ENCODE measurements at regions of chr5 and their contacts with region 1.

Region 1: GRCh38 chr5:124902097-124902821 is 155.8 kb upstream of the ZNF608 start:
- DNase-seq: no peak
- H3K4me3 ChIP-seq: no peak overlapping the region
- H3K27ac ChIP-seq: no peak overlapping the region
- H3K4me1 ChIP-seq: peaks cover 3% of the 10 kb centered on the region
- H3K27me3 ChIP-seq: no peaks in the 10 kb centered on the region
- CTCF ChIP-seq: no peak
- POLR2A ChIP-seq: no peak

Region 2: DNA sequence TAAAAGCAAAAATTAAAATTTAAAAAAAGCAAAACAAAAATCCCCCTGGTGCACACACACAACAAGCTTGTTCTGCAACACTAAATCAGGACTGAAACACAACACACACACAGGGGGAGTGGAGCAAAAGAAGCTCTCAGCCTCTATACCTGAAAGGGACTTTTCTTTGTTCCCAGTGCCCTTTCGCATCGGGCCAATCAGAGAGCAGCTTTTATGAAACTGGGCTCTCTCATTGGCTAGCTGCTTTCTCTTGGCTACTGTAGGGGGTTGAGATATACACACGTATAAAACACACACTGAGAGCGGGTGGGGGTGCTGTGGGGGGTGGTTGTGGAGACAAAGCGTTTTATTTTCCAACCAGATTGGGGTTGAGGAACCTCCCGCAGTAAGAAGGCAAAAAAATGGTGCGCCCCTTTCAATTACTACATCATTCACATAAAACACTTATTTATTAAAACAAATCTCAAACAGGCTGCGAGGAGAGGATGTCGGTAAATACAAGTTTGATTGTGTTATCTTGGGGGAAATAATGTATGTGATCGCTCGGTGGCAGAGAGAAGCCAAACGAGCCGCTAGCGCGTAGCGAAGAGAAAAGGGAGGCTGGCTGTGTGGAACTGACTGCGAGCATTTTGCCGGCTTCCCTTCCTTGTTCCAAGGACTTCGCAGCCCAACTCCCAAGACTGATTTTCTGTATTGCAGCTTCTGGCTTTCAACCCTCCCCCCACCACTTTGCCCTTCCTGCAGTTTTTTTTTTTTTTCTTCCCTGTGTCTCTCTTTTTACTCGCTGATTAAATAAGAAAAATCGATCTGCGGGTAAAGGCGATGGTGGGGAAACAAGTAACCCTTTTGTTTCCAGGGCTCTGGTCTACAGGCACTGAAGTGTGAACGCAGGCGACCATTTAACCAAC is 153.3 kb before region 1 on chr5:
- intact Hi-C with region 1: loop called (anchors 5 kb)
- DNase-seq: peak; percentile 93
- H3K4me3 ChIP-seq: peak overlapping the region; percentile 33 to 49
- H3K27ac ChIP-seq: peak overlapping the region; percentile 83 to 87
- H3K4me1 ChIP-seq: peaks cover 3% of the 10 kb centered on the region
- H3K27me3 ChIP-seq: no peaks in the 10 kb centered on the region
- CTCF ChIP-seq: no peak
- POLR2A ChIP-seq: peak; percentile 51

Region 3: GRCh38 chr5:124824637-124825158 is 77.6 kb before region 1 on chr5:
- intact Hi-C with region 1: loop called (anchors 10 kb)
- DNase-seq: no peak
- H3K4me3 ChIP-seq: no peak overlapping the region
- H3K27ac ChIP-seq: no peak overlapping the region
- H3K4me1 ChIP-seq: no peaks in the 10 kb centered on the region
- H3K27me3 ChIP-seq: no peaks in the 10 kb centered on the region
- CTCF ChIP-seq: no peak
- POLR2A ChIP-seq: no peak

Region 4: DNA sequence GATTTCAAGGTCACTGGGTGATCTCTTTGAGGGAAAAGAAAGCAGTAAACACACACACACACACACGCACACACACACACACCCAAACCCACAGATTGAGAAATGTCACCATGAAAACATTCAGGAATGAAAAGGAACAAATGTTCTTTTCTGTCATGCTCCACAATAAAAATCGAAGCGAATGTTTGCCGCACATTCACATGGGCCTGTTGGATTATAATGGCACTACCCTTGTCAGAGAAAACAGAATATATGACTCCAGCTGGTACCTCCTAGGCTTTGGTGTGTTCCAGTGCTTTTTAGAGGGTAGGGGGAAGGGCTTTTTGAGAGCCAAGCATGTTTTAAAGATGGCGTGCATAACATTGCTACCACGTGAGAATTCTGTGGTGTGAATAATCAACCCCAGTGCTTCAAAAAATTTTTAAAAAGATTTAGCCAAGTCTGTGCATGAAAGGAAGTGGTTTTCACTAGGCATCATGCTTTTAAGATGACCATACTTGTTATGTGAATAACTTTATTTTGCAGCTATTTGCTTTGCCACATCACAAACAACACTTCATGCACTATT is 35.0 kb before region 1 on chr5:
- intact Hi-C with region 1: loop called (anchors 5 kb)
- DNase-seq: no peak
- H3K4me3 ChIP-seq: no peak overlapping the region
- H3K27ac ChIP-seq: no peak overlapping the region
- H3K4me1 ChIP-seq: no peaks in the 10 kb centered on the region
- H3K27me3 ChIP-seq: no peaks in the 10 kb centered on the region
- CTCF ChIP-seq: no peak
- POLR2A ChIP-seq: no peak

Region 5: GRCh38 chr5:124941393-124942049 is 39.3 kb after region 1 on chr5:
- intact Hi-C with region 1: no loop called
- DNase-seq: no peak
- H3K4me3 ChIP-seq: no peak overlapping the region
- H3K27ac ChIP-seq: no peak overlapping the region
- H3K4me1 ChIP-seq: no peaks in the 10 kb centered on the region
- H3K27me3 ChIP-seq: no peaks in the 10 kb centered on the region
- CTCF ChIP-seq: no peak
- POLR2A ChIP-seq: no peak

Region 6: GRCh38 chr5:124952079-124952478 is 49.8 kb after region 1 on chr5:
- intact Hi-C with region 1: loop called (anchors 5 kb)
- DNase-seq: no peak
- H3K4me3 ChIP-seq: no peak overlapping the region
- H3K27ac ChIP-seq: no peak overlapping the region
- H3K4me1 ChIP-seq: no peaks in the 10 kb centered on the region
- H3K27me3 ChIP-seq: no peaks in the 10 kb centered on the region
- CTCF ChIP-seq: no peak
- POLR2A ChIP-seq: no peak

Region 7: GRCh38 chr5:125093776-125094175 is 191.5 kb after region 1 on chr5:
- intact Hi-C with region 1: no loop called
- DNase-seq: no peak
- H3K4me3 ChIP-seq: no peak overlapping the region
- H3K27ac ChIP-seq: no peak overlapping the region
- H3K4me1 ChIP-seq: no peaks in the 10 kb centered on the region
- H3K27me3 ChIP-seq: no peaks in the 10 kb centered on the region
- CTCF ChIP-seq: no peak
- POLR2A ChIP-seq: no peak

Region 8: GRCh38 chr5:125113328-125113727 is 211.1 kb after region 1 on chr5:
- intact Hi-C with region 1: no loop called
- DNase-seq: no peak
- H3K4me3 ChIP-seq: no peak overlapping the region
- H3K27ac ChIP-seq: no peak overlapping the region
- H3K4me1 ChIP-seq: no peaks in the 10 kb centered on the region
- H3K27me3 ChIP-seq: no peaks in the 10 kb centered on the region
- CTCF ChIP-seq: no peak
- POLR2A ChIP-seq: no peak